Activated CD4-positive, alpha-beta memory T cell treated with anti-CD3 and anti-CD28 coated beads for 36 hours (primary cell): ENCODE measurements at regions of chr12 and their contacts with region 1.

Region 1: GRCh38 chr12:92145731-92146496 is at the start of gene BTG1:
- DNase-seq: peak; percentile 100
- H3K4me3 Mint-ChIP-seq: peak within 1 kb of the TSS; percentile 100
- H3K27ac Mint-ChIP-seq: peak within 1 kb of the TSS; percentile 91
- H3K4me1 Mint-ChIP-seq: peaks cover 20% of the 10 kb centered on the region
- H3K27me3 Mint-ChIP-seq: peaks cover 2% of the 10 kb centered on the region
- total RNA-seq, gene BTG1: 137 to 144 TPM

Region 2: DNA sequence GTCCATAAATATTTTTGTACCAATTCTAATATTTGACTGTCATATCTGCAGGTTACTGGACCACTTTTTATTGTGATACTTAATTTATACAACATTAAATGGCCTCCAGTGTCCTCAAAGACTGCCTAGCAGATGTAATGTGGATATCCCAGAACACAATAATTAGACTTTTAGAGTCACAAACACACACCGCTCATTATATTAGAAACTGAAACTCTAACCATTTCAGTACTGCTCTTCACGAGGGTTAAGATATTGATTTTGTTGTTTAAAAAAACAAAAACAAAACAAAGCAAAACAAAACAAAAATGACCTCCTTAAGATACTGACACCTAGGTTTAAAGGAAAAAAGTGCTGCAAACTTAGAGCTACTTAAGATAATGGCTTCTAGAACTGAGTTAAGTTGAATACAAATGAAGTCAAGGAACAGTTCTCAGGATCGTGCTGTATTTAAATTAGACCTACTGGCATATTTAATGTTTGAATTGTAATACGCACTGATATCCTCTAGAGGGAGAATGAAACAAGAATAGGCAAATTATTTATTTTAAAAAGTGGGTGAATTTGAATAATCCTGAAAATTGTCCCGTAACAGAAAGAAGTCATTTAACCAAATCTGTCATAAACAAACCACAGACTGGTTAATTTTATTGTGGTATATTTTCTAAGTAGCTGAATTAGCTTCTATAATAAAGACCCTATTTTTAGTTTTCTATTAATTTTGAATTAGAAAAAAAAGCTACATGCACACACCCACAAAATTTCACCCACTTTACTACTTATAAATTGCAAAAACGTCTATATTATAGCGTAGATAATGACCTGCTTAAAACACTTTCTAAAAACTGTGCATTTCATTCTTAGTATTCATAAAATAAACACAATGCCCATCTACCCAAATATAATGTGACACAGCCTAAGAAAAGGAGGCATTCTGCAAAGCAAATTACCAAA is 568.1 kb before region 1 on chr12:
- CTCF ChIA-PET with region 1: no interaction called
- POLR2A ChIA-PET with region 1: no interaction called
- intact Hi-C with region 1: loop called (anchors 5 kb)
- DNase-seq: no peak
- H3K4me3 Mint-ChIP-seq: peak overlapping the region; percentile 63
- H3K27ac Mint-ChIP-seq: no peak overlapping the region
- H3K4me1 Mint-ChIP-seq: peaks cover 4% of the 10 kb centered on the region
- H3K27me3 Mint-ChIP-seq: peaks cover 2% of the 10 kb centered on the region

Region 3: DNA sequence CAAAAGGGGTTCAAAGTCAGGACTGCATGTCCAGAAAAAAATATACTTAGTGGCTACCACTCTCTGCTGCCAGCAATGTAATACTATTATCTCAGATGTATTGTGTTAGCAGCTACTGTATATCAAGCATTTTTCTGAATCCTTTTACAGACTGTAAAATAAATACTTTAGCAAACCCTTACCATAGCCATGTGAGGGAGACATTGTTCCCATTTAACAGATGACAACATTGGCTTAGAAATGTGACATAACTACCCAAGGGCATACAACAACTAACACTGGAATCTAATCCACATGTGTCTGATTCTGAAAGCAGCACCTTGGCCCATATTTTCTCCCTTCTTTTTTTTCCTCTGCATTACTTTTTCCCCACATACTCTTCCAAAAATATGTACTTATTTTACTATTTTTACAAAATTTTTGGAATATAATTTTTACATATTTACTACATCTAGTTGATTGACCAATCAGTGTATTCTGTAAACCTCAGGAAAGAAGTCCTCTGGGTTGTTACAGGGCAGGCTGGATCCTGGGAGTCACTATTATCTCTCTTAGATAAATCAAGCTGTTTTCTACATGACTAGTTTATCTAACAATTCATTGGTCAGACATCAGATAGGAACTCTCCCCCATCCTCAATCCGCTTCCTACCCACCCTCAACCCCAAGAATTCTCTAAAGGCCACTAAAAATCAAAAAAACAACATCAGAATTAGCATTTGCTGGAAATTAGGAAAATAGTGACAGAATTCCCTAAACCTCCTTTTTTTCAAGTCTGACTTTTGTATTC is 154.3 kb before region 1 on chr12:
- CTCF ChIA-PET with region 1: interaction called, 5 read pairs
- POLR2A ChIA-PET with region 1: no interaction called
- intact Hi-C with region 1: loop called (anchors 1 kb)
- DNase-seq: no peak
- H3K4me3 Mint-ChIP-seq: no peak overlapping the region
- H3K27ac Mint-ChIP-seq: no peak overlapping the region
- H3K4me1 Mint-ChIP-seq: peaks cover 27% of the 10 kb centered on the region
- H3K27me3 Mint-ChIP-seq: no peaks in the 10 kb centered on the region

Region 4: GRCh38 chr12:92185052-92185451 is 39.1 kb after region 1 on chr12:
- CTCF ChIA-PET with region 1: interaction called, 4 read pairs
- POLR2A ChIA-PET with region 1: interaction called, 6 read pairs
- intact Hi-C with region 1: loop called (anchors 1 kb)
- DNase-seq: peak; percentile 49
- H3K4me3 Mint-ChIP-seq: no peak overlapping the region
- H3K27ac Mint-ChIP-seq: peak overlapping the region; percentile 47
- H3K4me1 Mint-ChIP-seq: peaks cover 46% of the 10 kb centered on the region
- H3K27me3 Mint-ChIP-seq: no peaks in the 10 kb centered on the region

Region 5: DNA sequence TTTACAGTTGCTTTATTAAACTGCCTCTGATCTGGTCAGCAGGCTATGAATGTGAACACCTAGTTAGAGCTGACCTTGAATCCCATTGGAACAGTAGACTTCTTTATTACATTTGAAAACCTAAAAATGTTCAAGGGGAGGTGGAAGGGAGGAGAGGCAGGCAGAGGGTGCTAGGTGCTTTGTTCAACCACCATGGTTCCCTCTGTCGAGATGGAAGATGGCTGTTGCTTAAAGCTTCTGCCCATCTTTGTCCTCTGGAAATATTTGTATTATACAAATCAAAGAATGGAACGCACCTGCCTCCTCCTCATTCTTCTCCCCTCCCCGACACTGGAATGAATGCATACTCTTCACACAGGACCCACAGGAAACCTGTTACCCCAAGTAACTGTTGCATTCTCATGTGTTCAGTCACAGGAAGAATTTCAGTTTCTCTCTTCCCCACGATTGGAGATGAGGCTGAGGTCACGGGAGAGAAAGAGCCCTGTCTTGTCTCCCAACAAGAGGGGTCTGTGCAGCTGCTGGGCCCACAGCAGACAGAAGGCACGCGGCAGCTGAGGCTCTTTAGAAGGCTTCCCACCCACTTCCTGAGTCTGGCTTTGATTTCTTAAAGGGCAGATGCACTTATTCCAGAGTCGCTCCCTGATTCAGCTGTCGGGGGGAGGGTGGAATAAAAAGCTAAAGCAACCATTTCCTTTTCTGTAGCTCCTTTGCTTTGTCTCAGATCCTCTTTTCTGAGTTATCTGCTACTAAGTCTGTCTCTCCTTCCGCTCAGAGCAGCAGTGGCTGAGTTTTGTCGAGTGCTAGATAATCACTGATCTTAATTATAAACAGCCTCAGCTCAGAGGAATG is 217.6 kb after region 1 on chr12:
- CTCF ChIA-PET with region 1: interaction called, 4 read pairs
- POLR2A ChIA-PET with region 1: interaction called, 5 read pairs
- intact Hi-C with region 1: loop called (anchors 2 kb)
- DNase-seq: peak; percentile 55
- H3K4me3 Mint-ChIP-seq: peak overlapping the region; percentile 74
- H3K27ac Mint-ChIP-seq: peak overlapping the region; percentile 87
- H3K4me1 Mint-ChIP-seq: peaks cover 56% of the 10 kb centered on the region
- H3K27me3 Mint-ChIP-seq: no peaks in the 10 kb centered on the region

Region 6: DNA sequence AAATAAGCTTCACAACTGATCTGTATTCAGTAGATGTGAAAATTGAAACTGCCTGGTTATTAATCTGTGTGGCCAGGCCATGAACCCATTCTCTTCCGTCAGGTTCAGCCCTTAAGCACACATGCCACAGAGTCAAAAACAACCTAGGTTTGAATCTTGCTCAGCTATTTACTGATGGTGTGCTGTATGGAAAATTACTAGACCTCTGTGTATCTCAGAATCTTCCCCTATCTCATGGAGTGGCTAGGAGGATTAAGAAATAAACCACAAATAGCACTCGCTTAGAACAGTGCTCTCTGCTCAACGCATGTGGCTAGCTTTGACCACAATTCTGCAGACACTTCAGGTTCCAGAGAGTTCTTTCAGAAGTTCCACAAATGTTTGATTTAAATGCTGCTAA is 316.1 kb after region 1 on chr12:
- CTCF ChIA-PET with region 1: no interaction called
- POLR2A ChIA-PET with region 1: no interaction called
- intact Hi-C with region 1: no loop called
- DNase-seq: no peak
- H3K4me3 Mint-ChIP-seq: no peak overlapping the region
- H3K27ac Mint-ChIP-seq: peak overlapping the region; percentile 39
- H3K4me1 Mint-ChIP-seq: peaks cover 21% of the 10 kb centered on the region
- H3K27me3 Mint-ChIP-seq: no peaks in the 10 kb centered on the region

Region 7: GRCh38 chr12:92505254-92506231 is 359.6 kb after region 1 on chr12:
- CTCF ChIA-PET with region 1: interaction called, 3 read pairs
- POLR2A ChIA-PET with region 1: interaction called, 18 read pairs
- intact Hi-C with region 1: loop called (anchors 2 kb)
- DNase-seq: peak; percentile 75
- H3K4me3 Mint-ChIP-seq: peak overlapping the region; percentile 69
- H3K27ac Mint-ChIP-seq: peak overlapping the region; percentile 96
- H3K4me1 Mint-ChIP-seq: peaks cover 51% of the 10 kb centered on the region
- H3K27me3 Mint-ChIP-seq: no peaks in the 10 kb centered on the region

Region 8: DNA sequence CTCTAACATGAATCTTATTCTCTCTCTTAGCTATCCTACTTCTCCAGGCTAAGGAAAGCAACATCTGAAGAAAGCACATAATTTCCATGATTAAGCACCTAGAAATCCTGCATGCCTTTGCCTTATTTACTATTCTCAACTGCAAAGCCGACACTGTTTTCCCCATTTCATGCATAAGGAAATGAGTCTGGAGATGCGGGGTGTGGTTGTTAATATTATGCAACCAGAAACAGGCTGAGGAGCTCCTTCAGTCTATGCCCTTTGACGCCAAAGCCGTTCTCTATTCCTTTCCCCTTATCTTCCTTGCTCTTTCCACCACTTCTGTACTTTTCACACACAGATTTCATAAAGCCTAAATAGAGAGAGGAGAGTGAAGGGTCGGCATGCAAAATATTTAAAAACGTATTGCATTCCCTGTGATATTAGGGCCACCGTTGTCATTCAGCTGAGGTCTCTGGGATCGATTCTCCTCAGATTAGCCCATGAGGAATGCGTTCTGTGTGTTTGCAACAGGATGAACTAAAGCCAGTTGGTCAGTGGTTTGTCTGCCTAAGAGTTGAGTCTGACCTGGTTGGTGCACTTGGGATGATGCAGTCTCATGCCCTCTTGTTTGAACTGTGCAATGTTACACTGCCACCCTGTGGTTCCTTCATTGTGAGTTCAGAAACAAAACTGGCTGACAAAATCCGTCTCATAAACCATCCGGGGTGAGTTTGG is 503.8 kb after region 1 on chr12:
- CTCF ChIA-PET with region 1: no interaction called
- POLR2A ChIA-PET with region 1: no interaction called
- intact Hi-C with region 1: loop called (anchors 5 kb)
- DNase-seq: peak; percentile 65
- H3K4me3 Mint-ChIP-seq: no peak overlapping the region
- H3K27ac Mint-ChIP-seq: no peak overlapping the region
- H3K4me1 Mint-ChIP-seq: peaks cover 12% of the 10 kb centered on the region
- H3K27me3 Mint-ChIP-seq: no peaks in the 10 kb centered on the region